ENCODE measurements at regions of chr19 and their contacts with region 1.

Region 1: GRCh38 chr19:50383852-50384684 is at the start of gene POLD1:
- DNase-seq: peak; percentile 97 to 99 (median 98)
- H3K4me3 ChIP-seq: peak within 1 kb of the TSS; percentile 60
- H3K27ac ChIP-seq: peak within 1 kb of the TSS; percentile 58 to 80
- H3K4me1 ChIP-seq: peaks cover 2% of the 10 kb centered on the region
- H3K27me3 ChIP-seq: no peaks in the 10 kb centered on the region
- CTCF ChIP-seq: no peak
- EP300 ChIP-seq: peak; percentile 23
- POLR2A ChIP-seq: peak; percentile 20
- total RNA-seq, gene POLD1: 7.5 to 25.2 (median 20.3) TPM

Region 2: GRCh38 chr19:50344661-50345318 is 39.3 kb before region 1 on chr19:
- intact Hi-C with region 1: no loop called
- DNase-seq: no peak
- H3K4me3 ChIP-seq: no peak overlapping the region
- H3K27ac ChIP-seq: no peak overlapping the region
- H3K4me1 ChIP-seq: no peaks in the 10 kb centered on the region
- H3K27me3 ChIP-seq: no peaks in the 10 kb centered on the region
- CTCF ChIP-seq: no peak
- EP300 ChIP-seq: no peak
- POLR2A ChIP-seq: no peak

Region 3: GRCh38 chr19:50804420-50805272 is 420.6 kb after region 1 on chr19:
- intact Hi-C with region 1: loop called in 1 of 4 experiments (anchors 10 kb)
- DNase-seq: peak; percentile 99 to 100 (median 99)
- H3K4me3 ChIP-seq: peak overlapping the region; percentile 68
- H3K27ac ChIP-seq: peak overlapping the region; percentile 98 to 99
- H3K4me1 ChIP-seq: peaks cover 7% of the 10 kb centered on the region
- H3K27me3 ChIP-seq: no peaks in the 10 kb centered on the region
- CTCF ChIP-seq: peak in 1 of 3 donors; percentile 35
- EP300 ChIP-seq: no peak
- POLR2A ChIP-seq: peak; percentile 63

Region 4: GRCh38 chr19:51830274-51830673 is 1446.2 kb after region 1 on chr19:
- intact Hi-C with region 1: no loop called
- DNase-seq: no peak
- H3K4me3 ChIP-seq: no peak overlapping the region
- H3K27ac ChIP-seq: no peak overlapping the region
- H3K4me1 ChIP-seq: no peaks in the 10 kb centered on the region
- H3K27me3 ChIP-seq: no peaks in the 10 kb centered on the region
- CTCF ChIP-seq: peak in 1 of 3 donors; percentile 39
- EP300 ChIP-seq: no peak
- POLR2A ChIP-seq: no peak